Activated CD8-positive, alpha-beta T cell treated with anti-CD3 and anti-CD28 coated beads for 36 hours (primary cell): ENCODE measurements at regions of chr12 and their contacts with region 1.

Region 1: DNA sequence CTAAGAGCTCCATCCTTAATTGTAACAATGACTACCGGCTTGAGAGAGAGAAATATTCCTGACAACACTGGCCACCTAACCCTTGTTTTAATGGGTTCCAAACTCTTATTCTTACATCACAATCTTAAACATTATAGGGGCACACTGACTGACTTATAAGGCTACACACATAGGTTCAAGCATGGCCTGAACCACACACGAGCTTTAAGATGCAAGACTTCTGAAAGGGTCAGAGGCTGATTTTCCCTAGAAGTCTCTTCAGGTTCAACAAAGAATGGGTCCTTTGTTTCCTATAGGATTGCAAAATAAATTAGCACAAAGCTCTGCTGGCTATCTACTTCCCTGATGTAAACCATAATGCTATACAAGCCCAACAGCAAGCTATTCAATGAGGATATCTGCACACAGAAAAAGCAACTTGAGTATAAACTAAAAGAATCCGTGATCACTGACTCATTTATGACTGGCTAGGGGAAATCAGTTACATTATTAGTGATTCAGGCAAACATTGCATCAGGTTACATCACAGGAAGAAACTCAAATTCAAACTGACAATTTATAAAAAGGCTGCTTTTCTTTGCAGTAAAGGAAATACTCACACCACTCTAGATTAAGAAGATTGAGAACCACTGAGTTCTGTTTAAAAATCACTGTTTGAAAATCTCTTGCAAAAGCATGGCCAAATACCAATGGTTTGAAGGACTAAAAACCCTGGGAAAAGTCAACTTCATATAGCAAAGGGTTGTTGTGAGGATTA is 8.5 kb downstream of the BTG1 start:
- DNase-seq: no peak
- ATAC-seq: peak; percentile 41
- H3K4me3 Mint-ChIP-seq: peak overlapping the region; percentile 97
- H3K27ac Mint-ChIP-seq: peak overlapping the region; percentile 94
- H3K4me1 Mint-ChIP-seq: peaks cover 47% of the 10 kb centered on the region
- H3K27me3 Mint-ChIP-seq: no peaks in the 10 kb centered on the region
- CTCF ChIP-seq: no peak

Region 2: GRCh38 chr12:91811481-91812287 is 325.5 kb before region 1 on chr12:
- CTCF ChIA-PET with region 1: interaction called, 10 read pairs
- POLR2A ChIA-PET with region 1: no interaction called
- intact Hi-C with region 1: loop called (anchors 5 kb)
- DNase-seq: peak; percentile 87
- ATAC-seq: peak; percentile 78
- H3K4me3 Mint-ChIP-seq: no peak overlapping the region
- H3K27ac Mint-ChIP-seq: peak overlapping the region; percentile 79
- H3K4me1 Mint-ChIP-seq: peaks cover 26% of the 10 kb centered on the region
- H3K27me3 Mint-ChIP-seq: no peaks in the 10 kb centered on the region
- CTCF ChIP-seq: peak; percentile 92

Region 3: DNA sequence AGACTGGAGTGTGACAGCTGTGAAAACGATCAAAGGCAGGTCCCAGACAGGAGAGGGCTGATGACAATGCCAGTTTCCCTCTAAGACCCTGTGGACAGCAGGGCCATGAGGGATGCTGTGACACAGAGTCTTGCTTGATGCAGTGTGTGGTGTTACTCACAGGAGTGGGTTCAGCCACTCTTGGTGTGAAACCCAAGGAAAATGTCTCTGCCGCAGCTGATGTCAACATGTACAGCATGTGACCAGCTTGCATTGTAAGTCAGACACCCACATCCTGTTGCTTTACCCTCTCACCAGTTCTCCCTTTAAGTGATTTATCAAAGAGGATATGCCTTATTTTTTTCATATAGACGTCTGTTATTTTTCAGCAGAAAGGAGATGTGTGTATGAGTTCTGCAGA is 260.1 kb before region 1 on chr12:
- CTCF ChIA-PET with region 1: interaction called, 6 read pairs
- POLR2A ChIA-PET with region 1: interaction called, 7 read pairs
- intact Hi-C with region 1: loop called (anchors 5 kb)
- DNase-seq: peak; percentile 93
- ATAC-seq: peak; percentile 94
- H3K4me3 Mint-ChIP-seq: peak overlapping the region; percentile 63
- H3K27ac Mint-ChIP-seq: peak overlapping the region; percentile 99
- H3K4me1 Mint-ChIP-seq: peaks cover 63% of the 10 kb centered on the region
- H3K27me3 Mint-ChIP-seq: no peaks in the 10 kb centered on the region
- CTCF ChIP-seq: no peak

Region 4: GRCh38 chr12:92034858-92035401 is 102.2 kb before region 1 on chr12:
- CTCF ChIA-PET with region 1: interaction called, 3 read pairs
- POLR2A ChIA-PET with region 1: interaction called, 7 read pairs
- intact Hi-C with region 1: loop called (anchors 5 kb)
- DNase-seq: peak; percentile 53
- ATAC-seq: peak; percentile 47
- H3K4me3 Mint-ChIP-seq: peak overlapping the region; percentile 82
- H3K27ac Mint-ChIP-seq: peak overlapping the region; percentile 90
- H3K4me1 Mint-ChIP-seq: peaks cover 81% of the 10 kb centered on the region
- H3K27me3 Mint-ChIP-seq: no peaks in the 10 kb centered on the region
- CTCF ChIP-seq: no peak

Region 5: GRCh38 chr12:92059976-92060375 is 77.2 kb before region 1 on chr12:
- CTCF ChIA-PET with region 1: no interaction called
- POLR2A ChIA-PET with region 1: interaction called, 3 read pairs
- intact Hi-C with region 1: loop called (anchors 5 kb)
- DNase-seq: no peak
- ATAC-seq: no peak
- H3K4me3 Mint-ChIP-seq: no peak overlapping the region
- H3K27ac Mint-ChIP-seq: peak overlapping the region; percentile 78
- H3K4me1 Mint-ChIP-seq: peaks cover 82% of the 10 kb centered on the region
- H3K27me3 Mint-ChIP-seq: no peaks in the 10 kb centered on the region
- CTCF ChIP-seq: no peak

Region 6: GRCh38 chr12:92123780-92124688 is 13.1 kb before region 1 on chr12:
- CTCF ChIA-PET with region 1: interaction called, 3 read pairs
- POLR2A ChIA-PET with region 1: interaction called, 16 read pairs
- intact Hi-C with region 1: no loop called
- DNase-seq: no peak
- ATAC-seq: peak; percentile 18
- H3K4me3 Mint-ChIP-seq: peak overlapping the region; percentile 34
- H3K27ac Mint-ChIP-seq: peak overlapping the region; percentile 84
- H3K4me1 Mint-ChIP-seq: peaks cover 58% of the 10 kb centered on the region
- H3K27me3 Mint-ChIP-seq: no peaks in the 10 kb centered on the region
- CTCF ChIP-seq: no peak

Region 7: DNA sequence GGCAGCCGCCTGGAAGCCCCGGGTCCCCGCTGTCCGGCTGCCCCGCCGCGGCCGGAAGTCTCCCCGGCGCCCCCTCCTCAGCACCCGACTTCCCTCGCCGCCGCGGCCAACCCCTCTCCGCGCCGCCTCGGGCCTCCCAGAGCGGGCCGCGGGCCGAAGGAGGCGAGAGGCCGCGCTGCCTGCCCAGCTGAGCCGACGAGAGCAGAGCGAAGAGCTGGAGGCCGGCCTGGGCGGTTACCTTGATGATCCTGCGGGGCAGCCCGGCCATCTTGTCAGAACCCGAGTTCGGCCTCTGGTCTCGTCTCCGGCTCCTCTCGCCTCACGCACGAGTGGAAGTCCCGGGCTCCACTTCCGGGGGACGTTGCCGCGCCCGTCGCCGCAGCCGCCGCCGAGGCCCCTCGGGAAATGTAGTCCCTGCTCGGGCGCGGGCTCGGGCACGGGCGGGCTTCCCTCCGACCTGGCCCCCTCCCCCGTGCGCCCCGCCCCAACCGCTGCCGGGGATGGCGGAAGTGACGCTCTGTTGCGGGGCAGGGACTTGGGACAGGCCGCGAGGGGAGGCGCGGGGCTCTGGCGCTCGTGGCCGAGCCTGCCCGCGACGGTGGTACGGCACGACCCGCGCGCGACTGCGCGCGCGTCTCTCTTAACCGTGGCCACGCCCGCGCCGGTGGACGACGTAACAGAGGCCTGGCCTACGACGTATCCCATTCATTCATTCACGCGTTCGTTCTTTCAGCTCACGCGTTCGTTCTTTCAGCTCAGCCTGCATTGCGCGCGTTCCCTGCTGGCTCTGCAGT is 1304.7 kb after region 1 on chr12 and contains the start of gene UBE2N:
- CTCF ChIA-PET with region 1: no interaction called
- POLR2A ChIA-PET with region 1: no interaction called
- intact Hi-C with region 1: loop called (anchors 10 kb)
- DNase-seq: peak; percentile 96
- ATAC-seq: peak; percentile 86
- H3K4me3 Mint-ChIP-seq: peak within 1 kb of the TSS; percentile 99
- H3K27ac Mint-ChIP-seq: peak within 1 kb of the TSS; percentile 98
- H3K4me1 Mint-ChIP-seq: peaks cover 48% of the 10 kb centered on the region
- H3K27me3 Mint-ChIP-seq: no peaks in the 10 kb centered on the region
- CTCF ChIP-seq: no peak
- total RNA-seq, gene UBE2N: 186 to 192 TPM